ENCODE measurements at regions of chr22 and their contacts with region 1.

Region 1: DNA sequence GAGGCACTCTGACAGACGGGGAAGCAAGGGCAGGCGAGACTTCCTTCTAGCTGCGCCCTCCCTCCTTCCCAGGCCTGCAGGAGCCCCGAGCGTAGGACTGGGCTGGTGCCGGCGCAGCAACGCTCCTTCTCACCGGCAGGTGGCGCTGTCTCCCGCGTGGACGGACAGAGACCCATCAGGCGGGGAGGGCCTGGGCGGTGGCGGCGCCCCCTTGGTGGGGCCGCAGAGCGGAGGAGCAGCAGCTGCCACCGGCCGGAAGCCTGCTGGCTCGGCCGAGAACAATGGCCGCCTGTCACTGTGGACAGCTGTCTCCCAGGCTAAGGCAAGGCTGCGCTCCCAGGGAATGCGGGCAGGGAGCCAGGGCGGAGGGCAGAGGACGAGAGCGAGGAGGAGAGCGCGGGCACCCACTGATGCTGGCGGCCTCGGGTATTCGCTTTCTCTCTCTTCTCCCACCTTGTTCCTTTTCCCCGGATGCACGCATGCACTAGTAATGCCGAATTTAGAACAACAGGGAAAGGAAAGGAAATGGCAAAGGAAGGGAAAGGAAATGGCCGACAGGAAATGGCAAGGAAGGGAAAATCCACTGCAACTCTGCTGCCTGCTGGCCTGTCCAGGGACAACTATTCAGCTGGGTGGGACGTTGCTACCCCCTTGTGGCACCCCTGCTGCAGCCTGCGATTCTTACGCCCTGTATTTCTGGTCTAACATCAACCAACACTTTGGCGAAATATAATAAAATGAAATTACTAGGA is 14.4 kb downstream of the PPM1F start:
- DNase-seq: peak; percentile 100
- ATAC-seq: peak; percentile 97
- H3K4me3 ChIP-seq: peak overlapping the region; percentile 45
- H3K27ac ChIP-seq: peak overlapping the region; percentile 85
- H3K4me1 ChIP-seq: peaks cover 12 to 52% of the 10 kb centered on the region in 2 experiments
- H3K27me3 ChIP-seq: no peaks in the 10 kb centered on the region
- CTCF ChIP-seq: peak in 2 of 3 experiments; percentile 100; a peak in 4 of 6 replicates
- EP300 ChIP-seq: peak; percentile 83
- POLR2A ChIP-seq: no peak
- RAD21 ChIP-seq: no peak

Region 2: GRCh38 chr22:21641789-21642583 is 296.3 kb before region 1 on chr22 and contains the start of gene SDF2L1:
- CTCF ChIA-PET with region 1: interaction called, 5 read pairs
- POLR2A ChIA-PET with region 1: interaction called, 15 read pairs
- in situ Hi-C with region 1: no loop called
- intact Hi-C with region 1: no loop called
- DNase-seq: peak; percentile 100
- ATAC-seq: peak; percentile 94
- H3K4me3 ChIP-seq: peak within 1 kb of the TSS; percentile 59
- H3K27ac ChIP-seq: peak within 1 kb of the TSS; percentile 83
- H3K4me1 ChIP-seq: peaks cover 31 to 57% of the 10 kb centered on the region in 2 experiments
- H3K27me3 ChIP-seq: no peaks in the 10 kb centered on the region; a peak in 1 of 5 replicates
- CTCF ChIP-seq: peak in 2 of 3 experiments; percentile 43 to 84; a peak in 3 of 6 replicates
- EP300 ChIP-seq: no peak; the same call in 1 of the 2 replicates
- POLR2A ChIP-seq: no peak
- RAD21 ChIP-seq: no peak
- polyA plus RNA-seq, gene SDF2L1: 15.1 to 34.8 TPM

Region 3: DNA sequence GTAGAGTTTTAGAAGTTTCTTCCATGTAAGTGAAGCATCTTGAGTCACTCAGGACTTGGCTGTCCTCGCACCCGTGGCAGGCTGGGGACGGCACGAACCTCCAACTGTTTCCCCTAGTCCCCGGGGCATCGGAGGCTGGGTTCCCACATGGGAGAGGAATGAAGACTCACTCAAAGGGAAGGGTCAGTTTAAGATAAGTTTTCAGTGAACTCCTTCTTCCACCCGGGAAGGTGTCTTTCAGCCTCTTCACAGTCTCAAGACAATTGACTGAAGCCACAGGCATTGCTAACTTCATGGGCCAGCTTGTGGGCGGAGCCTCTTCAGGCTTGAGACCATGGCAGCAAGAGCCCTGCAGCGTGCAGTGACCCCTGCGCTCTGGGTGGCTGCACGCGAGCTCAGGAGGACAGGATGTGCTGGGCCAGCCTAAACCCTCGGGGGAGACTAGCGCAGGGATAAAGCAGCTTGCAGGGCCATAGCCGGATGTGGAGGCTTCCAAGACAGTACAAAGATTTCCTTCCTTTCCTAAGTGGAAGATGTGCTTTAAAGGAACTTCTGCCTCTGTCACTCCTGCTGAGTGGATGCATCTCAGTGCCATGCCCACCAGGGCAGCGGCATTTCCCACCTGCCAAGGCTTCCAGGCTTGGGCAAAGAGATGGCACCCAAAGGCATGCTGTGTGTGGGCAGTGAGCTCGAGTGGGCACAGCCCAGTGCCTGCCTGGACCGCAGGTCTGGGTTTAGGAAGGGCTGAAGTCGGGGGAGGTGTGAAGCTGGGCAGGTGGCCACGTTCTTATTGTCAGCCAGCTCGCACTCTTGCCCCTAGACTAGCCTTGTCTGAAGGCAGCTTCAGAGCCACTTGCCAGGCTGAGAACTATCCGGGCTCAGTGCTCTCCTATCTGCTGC is 239.6 kb before region 1 on chr22:
- CTCF ChIA-PET with region 1: no interaction called
- POLR2A ChIA-PET with region 1: interaction called, 27 read pairs
- in situ Hi-C with region 1: no loop called
- intact Hi-C with region 1: no loop called
- DNase-seq: peak in 3 of 4 experiments; percentile 65 to 76 (median 67)
- ATAC-seq: peak; percentile 51
- H3K4me3 ChIP-seq: no peak overlapping the region
- H3K27ac ChIP-seq: no peak overlapping the region
- H3K4me1 ChIP-seq: peaks cover 9 to 50% of the 10 kb centered on the region in 2 experiments; a peak in 4 of 5 replicates
- H3K27me3 ChIP-seq: peaks cover 21 to 23% of the 10 kb centered on the region in 2 experiments
- CTCF ChIP-seq: 0 out of 6 replicates have a peak, but pooled peaks of 1 of the 3 experiments have one; percentile 6
- EP300 ChIP-seq: no peak
- POLR2A ChIP-seq: no peak
- RAD21 ChIP-seq: peak in 1 of 2 experiments; percentile 12; a peak in 1 of 4 replicates

Region 4: GRCh38 chr22:21735200-21736076 is 202.8 kb before region 1 on chr22 and contains the start of gene YPEL1:
- CTCF ChIA-PET with region 1: no interaction called
- POLR2A ChIA-PET with region 1: interaction called, 9 read pairs
- in situ Hi-C with region 1: no loop called
- intact Hi-C with region 1: loop called (anchors 1 kb)
- DNase-seq: peak; percentile 100
- ATAC-seq: peak; percentile 96
- H3K4me3 ChIP-seq: peak within 1 kb of the TSS; percentile 52
- H3K27ac ChIP-seq: peak within 1 kb of the TSS; percentile 42
- H3K4me1 ChIP-seq: peaks cover 17 to 29% of the 10 kb centered on the region in 2 experiments
- H3K27me3 ChIP-seq: peaks cover 52 to 57% of the 10 kb centered on the region in 2 experiments
- CTCF ChIP-seq: peak in 1 of 3 experiments; percentile 1; a peak in 2 of 6 replicates
- EP300 ChIP-seq: peak; percentile 43
- POLR2A ChIP-seq: no peak
- RAD21 ChIP-seq: peak in 1 of 2 experiments; percentile 59; a peak in 2 of 4 replicates
- polyA plus RNA-seq, gene YPEL1: 0.07 to 0.10 TPM

Region 5: DNA sequence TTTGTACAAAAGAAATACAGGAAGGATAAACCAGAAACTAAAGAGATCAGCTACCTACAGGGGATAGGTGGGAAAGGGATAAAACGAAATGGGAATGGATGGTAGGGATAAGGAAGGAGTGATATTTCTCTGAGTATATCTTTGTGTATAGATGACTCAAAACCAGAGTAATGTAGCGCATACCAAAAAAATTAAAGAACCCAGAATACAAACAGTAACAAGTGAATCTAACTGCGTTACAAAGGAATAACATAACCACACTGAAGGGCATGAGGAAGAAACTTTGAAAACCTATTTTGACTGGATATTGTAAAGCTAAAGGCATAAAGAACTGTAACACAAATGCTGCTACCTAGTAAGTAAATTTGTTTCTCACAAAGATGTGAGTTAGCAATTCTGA is 108.7 kb before region 1 on chr22:
- CTCF ChIA-PET with region 1: no interaction called
- POLR2A ChIA-PET with region 1: interaction called, 3 read pairs
- in situ Hi-C with region 1: no loop called
- intact Hi-C with region 1: loop called (anchors 5 kb)
- DNase-seq: no peak
- ATAC-seq: no peak
- H3K4me3 ChIP-seq: no peak overlapping the region
- H3K27ac ChIP-seq: no peak overlapping the region
- H3K4me1 ChIP-seq: peaks cover 28 to 44% of the 10 kb centered on the region in 2 experiments
- H3K27me3 ChIP-seq: no peaks in the 10 kb centered on the region
- CTCF ChIP-seq: no peak
- EP300 ChIP-seq: no peak
- POLR2A ChIP-seq: no peak
- RAD21 ChIP-seq: no peak

Region 6: GRCh38 chr22:21972293-21972779 is 34.1 kb after region 1 on chr22:
- CTCF ChIA-PET with region 1: no interaction called
- POLR2A ChIA-PET with region 1: interaction called, 331 read pairs
- in situ Hi-C with region 1: no loop called
- intact Hi-C with region 1: no loop called
- DNase-seq: peak; percentile 91 to 100 (median 99)
- ATAC-seq: peak; percentile 86
- H3K4me3 ChIP-seq: no peak overlapping the region
- H3K27ac ChIP-seq: no peak overlapping the region
- H3K4me1 ChIP-seq: peaks cover 0 to 19% of the 10 kb centered on the region in 2 experiments; a peak in 1 of 5 replicates
- H3K27me3 ChIP-seq: no peaks in the 10 kb centered on the region
- CTCF ChIP-seq: peak; percentile 97 to 100 (median 99)
- EP300 ChIP-seq: no peak
- POLR2A ChIP-seq: no peak
- RAD21 ChIP-seq: peak in 1 of 2 experiments; percentile 88; a peak in 2 of 4 replicates

Measured in K562 (cell line).